Right ventricle myocardium superior (tissue), 1 donor: ENCODE measurements at regions of chr1 and their contacts with region 1.

Region 1: GRCh38 chr1:24847995-24848881 is 81.8 kb downstream of the RUNX3 start:
- DNase-seq: peak; percentile 97
- ATAC-seq: peak; percentile 96

Region 2: DNA sequence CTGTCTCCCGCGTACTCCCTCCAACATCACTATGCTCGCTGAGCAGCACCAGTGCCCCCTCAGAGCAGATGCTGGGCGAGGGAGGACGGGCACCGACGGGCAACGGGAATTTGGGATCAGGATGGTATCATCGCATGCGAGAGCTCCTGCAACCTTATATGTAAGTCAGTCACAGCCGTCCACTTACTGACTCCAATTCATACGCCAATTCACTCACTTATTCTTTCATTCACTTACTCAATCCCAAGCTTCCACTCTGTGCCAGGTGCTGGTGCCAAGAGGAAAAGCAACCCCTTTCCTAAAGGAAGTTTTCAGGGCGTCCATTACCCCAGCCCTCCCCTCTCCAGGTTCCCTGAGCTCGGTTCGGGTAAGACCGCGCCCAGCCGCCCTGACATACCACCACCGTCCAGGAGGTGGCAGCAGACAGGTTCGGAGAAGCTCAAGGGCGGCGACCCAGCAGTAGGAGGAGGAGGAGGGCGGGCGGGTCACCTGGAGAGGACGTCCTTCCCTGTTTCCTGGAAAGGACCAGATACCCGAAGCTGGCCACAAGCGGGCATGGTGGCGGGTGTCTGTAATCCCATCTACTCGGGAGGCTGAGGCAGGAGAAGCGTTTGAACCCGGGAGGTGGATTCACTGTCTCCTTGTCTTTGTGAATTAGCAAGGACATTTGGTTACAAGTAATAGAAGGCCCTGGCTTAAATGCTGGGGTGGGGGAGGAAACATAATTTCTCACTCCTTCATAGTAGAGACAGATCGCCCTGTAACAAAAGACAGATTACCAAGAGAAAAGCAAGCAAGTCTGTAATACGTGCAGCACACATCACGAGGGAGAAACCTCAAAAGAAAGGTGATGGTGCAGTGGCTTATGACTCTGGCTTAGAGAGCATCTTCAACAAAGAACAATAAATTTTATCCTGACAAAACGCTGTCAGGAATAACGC is 697.7 kb before region 1 on chr1:
- intact Hi-C with region 1: no loop called
- DNase-seq: peak; percentile 93
- ATAC-seq: peak; percentile 97

Region 3: DNA sequence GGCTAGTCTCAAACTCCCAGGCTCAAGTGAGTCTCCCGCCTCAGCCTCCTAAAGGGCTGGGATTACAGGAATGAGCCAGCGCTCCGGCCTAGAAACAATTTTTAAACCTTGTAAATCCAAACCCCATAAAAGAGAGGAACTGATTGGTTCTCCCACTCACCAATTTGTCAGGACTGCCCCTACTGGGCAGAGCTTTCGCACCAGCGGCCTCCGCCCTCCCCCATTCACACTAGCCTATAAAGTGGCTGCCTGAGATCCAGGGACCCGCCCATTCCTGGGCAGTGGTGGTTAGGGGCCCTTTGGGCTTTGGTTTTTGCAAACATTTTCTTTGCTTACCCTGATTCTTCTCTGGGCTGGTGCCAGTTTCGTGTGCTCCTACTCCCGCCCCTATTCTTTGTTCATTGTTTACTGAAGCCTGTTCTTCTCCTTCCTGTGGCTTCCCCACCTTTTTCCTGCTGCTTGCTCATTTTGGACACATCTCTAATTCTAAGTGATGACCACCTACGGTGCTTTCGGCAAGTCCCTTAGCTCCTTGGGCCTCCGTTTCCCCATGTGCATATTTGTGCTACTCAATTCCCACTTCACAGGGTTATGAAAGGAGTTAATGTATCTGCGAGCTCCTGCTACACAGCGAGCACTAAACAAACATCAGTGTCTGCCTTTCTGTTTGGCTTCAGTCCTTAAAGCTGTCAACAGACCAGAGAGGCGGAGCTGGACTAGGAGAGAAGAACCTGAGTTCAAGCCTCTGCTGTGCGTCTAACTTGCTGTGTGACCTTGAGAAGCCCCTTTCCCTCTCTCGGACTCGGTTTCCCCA is 142.8 kb before region 1 on chr1:
- intact Hi-C with region 1: no loop called
- DNase-seq: peak; percentile 91
- ATAC-seq: peak; percentile 95

Region 4: GRCh38 chr1:25099343-25099951 is 251.2 kb after region 1 on chr1:
- intact Hi-C with region 1: loop called (anchors 10 kb)
- DNase-seq: no peak
- ATAC-seq: no peak

Region 5: DNA sequence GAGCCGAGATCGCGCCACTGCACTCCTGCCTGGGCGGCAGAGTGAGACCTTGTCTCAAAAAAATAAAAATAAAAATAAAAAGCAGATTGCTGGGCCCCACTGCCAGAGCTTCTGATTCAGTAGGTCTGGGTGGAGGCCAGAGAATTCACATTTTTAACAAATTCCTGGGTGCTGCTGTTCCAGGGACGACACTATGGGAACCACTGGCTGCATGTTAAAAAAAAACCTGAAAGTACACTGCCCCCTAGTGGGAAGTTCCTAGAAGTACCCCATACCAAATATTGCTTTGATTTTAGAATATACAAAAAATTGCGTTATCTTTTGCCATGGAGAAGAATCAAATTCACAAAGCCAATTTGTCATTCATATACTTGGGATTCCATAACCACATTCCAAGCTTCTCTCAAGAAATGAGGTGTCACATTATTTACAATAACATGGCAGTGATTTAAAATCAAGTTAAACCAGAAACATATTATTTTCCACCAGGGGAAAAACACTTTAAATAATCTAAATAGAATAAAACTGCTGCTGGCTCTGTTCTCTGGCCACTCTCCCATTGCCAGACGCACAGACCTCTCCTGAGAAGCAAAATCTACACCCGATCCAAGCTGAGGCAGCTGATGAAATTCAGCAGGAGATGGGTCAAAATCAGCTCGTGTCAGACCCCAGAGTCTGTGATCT is 356.7 kb after region 1 on chr1:
- intact Hi-C with region 1: loop called (anchors 5 kb)
- DNase-seq: no peak
- ATAC-seq: peak; percentile 79